AG04450 (cell line): ENCODE measurements at regions of chr7 and their contacts with region 1.

Region 1: DNA sequence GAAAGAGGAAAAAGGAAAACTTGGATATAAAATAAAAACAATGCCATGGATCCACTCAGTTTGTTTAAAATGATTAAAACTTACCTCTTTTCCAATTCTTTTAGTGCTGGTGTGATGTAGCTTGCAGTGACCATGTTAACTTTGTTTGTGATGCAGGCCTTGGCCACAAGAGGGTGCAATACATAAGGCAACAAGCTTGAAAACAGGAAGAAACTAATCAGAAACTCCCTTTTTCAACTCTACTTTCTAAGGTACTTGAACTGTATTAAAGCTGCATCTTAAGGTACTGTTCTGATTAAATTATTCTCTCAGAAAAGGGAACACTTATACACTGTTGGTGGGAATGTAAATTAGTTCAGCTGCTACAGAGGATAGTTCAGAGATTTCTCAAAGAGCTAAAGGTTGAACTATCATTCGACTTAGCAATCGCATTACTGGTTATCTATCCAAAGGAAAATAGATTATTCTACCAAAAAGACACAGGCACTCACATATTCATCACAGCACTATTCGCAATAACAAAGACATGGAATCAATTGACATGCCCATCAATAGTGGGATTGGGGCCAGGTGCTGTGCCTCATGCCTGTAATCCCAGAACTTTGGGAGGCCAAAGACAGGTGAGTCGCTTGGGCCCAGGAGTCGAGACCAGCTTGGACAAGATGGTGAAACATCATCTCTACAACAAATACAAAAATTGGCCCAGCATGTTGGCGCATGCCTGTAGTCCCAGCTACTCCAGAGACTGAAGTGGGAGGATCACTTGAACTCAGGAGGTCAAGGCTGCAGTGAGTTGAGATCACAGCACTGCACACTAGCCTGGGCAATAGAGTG is 50.9 kb downstream of the AASS start:
- DNase-seq: peak; percentile 63
- H3K4me3 ChIP-seq: no peak overlapping the region
- H3K27ac ChIP-seq: no peak overlapping the region
- H3K27me3 ChIP-seq: no peaks in the 10 kb centered on the region
- CTCF ChIP-seq: peak; percentile 97

Region 2: GRCh38 chr7:121966276-121966934 is 126.8 kb before region 1 on chr7:
- CTCF ChIA-PET with region 1: no interaction called
- POLR2A ChIA-PET with region 1: no interaction called
- DNase-seq: no peak
- H3K4me3 ChIP-seq: no peak overlapping the region
- H3K27ac ChIP-seq: no peak overlapping the region
- H3K27me3 ChIP-seq: no peaks in the 10 kb centered on the region
- CTCF ChIP-seq: no peak

Region 3: DNA sequence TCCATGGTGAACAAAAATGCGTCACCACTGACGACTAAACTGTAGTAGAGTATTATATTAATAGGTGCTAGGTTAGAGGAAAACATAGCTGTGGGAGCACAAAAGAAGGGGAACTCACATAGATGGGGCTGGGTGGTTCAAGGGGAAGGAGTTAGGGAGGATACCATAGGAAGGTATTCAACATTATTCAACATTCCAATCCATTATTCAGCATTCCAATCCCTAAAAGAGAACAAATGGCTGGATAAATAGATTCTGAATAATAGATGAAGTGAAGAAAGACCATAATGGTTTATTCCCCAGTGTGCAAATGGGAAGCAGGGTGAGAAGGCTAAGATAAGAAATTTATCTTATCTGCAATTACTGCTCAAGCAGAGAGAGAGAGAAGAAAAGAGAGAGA is 10.5 kb before region 1 on chr7:
- CTCF ChIA-PET with region 1: interaction called, 69 read pairs
- POLR2A ChIA-PET with region 1: no interaction called
- DNase-seq: no peak
- H3K4me3 ChIP-seq: no peak overlapping the region
- H3K27ac ChIP-seq: no peak overlapping the region
- H3K27me3 ChIP-seq: no peaks in the 10 kb centered on the region
- CTCF ChIP-seq: no peak

Region 4: DNA sequence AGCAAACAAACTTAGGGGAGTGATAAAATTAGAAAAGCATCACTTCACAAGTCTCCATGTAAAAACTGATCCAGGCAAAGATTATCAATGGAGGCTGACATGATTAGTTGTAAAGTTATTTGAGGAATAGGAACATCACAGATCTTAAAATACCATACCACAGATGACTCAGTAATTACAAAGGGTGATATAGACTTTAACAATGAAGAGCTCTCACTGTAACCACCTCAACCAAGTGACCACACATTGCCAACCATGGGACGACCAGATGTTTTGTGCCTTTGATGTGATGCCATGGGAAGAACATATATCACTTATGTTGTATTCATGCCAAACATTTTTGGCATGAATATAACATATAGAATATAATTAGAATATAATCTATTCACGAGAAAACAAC is 39.2 kb after region 1 on chr7:
- CTCF ChIA-PET with region 1: interaction called, 18 read pairs
- POLR2A ChIA-PET with region 1: no interaction called
- DNase-seq: no peak
- H3K4me3 ChIP-seq: no peak overlapping the region
- H3K27ac ChIP-seq: no peak overlapping the region
- H3K27me3 ChIP-seq: no peaks in the 10 kb centered on the region
- CTCF ChIP-seq: no peak

Region 5: DNA sequence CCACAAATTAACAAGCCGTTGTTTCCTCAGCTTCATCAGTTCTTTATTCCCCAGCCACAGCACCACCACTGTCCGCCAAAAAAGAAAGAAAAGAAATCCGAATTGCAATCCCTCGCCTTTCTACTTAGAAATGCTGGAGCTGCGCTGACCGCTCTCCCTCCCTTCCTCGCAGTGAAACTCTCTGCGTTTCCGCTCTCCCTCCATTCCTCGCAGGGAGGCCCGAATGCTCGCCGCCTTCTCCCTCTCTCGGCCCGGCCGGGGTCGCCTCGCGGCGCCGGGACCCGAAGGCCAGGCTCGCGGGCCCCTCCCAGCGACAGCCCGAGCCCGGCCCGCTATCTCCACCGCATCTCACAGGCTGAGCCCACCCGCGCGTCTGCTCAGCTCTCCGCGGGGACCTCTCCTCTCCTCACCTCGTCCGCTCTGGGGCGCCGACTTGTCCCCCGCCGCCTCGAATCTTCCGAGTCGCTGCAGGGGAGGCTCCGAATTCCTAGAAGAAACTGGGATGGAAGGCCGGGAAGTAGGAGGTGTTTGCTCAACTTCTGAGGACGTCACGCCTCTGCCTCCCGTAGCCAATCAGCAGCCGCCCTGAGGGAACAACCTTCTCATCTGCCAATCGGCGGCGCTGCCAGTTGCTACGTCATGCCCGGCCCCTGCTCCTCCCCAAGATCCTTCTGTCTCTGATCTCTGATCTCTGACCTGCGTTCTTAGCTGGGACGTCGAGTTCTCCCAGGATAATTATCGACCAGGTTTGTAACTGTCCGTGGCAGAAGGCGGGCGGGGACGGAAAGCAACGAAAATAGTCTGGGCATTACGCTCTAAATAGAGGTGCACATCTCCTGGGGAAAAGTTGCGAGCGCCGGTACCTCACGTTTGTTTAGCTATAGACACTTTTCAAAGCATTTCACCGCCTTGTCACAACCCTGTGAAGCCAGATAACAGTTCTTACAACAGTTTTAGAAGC is 50.9 kb after region 1 on chr7 and contains the start of gene AASS:
- CTCF ChIA-PET with region 1: interaction called, 18 read pairs
- POLR2A ChIA-PET with region 1: no interaction called
- DNase-seq: peak; percentile 76
- H3K4me3 ChIP-seq: peak within 1 kb of the TSS; percentile 83
- H3K27ac ChIP-seq: peak within 1 kb of the TSS; percentile 94
- H3K27me3 ChIP-seq: peaks cover 3% of the 10 kb centered on the region
- CTCF ChIP-seq: no peak
- polyA plus RNA-seq, gene AASS: 14.5 and 16.1 TPM in 2 replicates